ENCODE measurements at regions of chr3 and their contacts with region 1.

Region 1: DNA sequence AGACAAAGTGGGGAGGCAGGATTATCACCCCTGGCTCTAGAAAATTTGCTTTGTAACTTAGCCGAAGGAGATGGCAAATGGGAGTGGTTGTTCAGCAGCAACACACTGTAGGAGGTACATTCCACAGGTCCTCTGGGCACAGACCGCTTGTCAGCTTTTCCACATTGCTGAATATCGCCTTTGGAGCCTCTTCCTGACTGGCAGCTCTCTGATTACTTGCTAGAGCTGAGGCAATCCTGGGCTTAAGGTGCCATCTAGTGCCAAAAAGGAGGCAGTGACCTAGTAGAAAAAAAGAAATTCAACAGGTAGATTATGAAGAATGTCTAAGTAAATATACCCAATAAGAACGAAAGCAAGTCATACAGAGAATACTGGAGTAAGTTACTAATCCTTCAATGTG is 13.1 kb upstream of the SCN5A start:
- DNase-seq: peak; percentile 26
- H3K4me3 Mint-ChIP-seq: no peak overlapping the region
- H3K27ac Mint-ChIP-seq: no peak overlapping the region
- H3K4me1 Mint-ChIP-seq: no peaks in the 10 kb centered on the region
- H3K27me3 Mint-ChIP-seq: peaks cover 47% of the 10 kb centered on the region

Region 2: DNA sequence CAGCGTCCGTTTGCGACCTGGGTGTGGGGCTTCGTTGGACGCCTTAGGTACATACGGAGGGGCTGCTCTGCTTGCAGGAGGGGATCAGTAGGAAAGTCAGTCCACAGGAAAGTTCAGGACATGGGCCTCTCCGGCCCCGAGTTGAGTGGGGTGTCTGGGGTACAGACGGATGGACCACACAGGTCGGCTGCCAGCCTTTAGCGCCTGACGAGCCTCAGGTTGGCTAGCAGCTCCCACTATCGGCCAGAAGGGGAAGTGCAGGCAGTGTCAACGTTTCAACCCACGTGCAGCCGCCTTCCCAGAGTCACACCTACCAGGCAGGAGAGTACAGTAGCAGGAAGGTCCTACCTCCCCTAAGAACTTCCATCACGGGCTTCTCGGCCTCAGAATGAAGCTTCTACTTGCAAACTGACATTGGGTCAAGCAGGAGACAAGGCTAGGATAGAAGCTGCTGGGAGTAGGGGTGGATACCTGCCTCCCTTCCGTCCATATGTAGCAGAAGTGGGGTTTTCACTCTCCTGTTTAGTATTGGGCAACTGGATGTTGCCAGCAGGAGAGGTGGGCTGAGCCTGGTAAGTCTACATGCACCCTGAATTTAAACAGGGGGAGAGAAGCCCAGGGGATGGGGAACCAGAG is 11.3 kb before region 1 on chr3:
- CTCF ChIA-PET with region 1: interaction called, 15 read pairs
- POLR2A ChIA-PET with region 1: no interaction called
- DNase-seq: peak; percentile 78
- H3K4me3 Mint-ChIP-seq: no peak overlapping the region
- H3K27ac Mint-ChIP-seq: peak overlapping the region; percentile 36
- H3K4me1 Mint-ChIP-seq: peaks cover 6% of the 10 kb centered on the region
- H3K27me3 Mint-ChIP-seq: peaks cover 14% of the 10 kb centered on the region

Measured in activated CD4-positive, alpha-beta T cell treated with anti-CD3 and anti-CD28 coated beads, Interleukin-2, amount 10 ng/mL, durations not matched to agents 7 days and 5 days (primary cell).